ENCODE measurements at regions of chr19 and their contacts with region 1.

Region 1: DNA sequence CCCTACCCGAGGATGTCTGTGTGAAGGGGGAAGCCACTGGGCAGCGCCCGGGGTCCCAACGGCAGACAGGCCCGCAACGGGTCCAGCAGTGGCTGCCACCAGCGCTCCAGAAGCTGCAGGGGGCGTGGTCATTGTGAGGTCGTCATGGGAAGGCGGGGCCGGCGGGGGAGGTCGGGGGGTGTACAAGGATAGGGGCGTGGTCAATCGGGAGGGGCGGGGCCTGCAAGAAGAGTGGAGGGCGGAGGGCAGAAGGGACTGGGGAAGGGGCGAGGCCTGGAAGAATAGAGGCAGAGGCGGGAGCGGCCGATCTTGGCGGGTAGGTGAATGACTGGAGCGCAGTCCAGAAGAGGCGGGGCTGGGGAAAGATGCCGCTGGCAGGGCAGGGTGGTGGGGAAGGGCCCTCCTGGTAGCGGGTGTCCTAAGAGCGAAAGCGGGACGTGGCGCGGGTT is 4.4 kb downstream of the FUZ start:
- DNase-seq: peak; percentile 95
- ATAC-seq: peak; percentile 78

Region 2: DNA sequence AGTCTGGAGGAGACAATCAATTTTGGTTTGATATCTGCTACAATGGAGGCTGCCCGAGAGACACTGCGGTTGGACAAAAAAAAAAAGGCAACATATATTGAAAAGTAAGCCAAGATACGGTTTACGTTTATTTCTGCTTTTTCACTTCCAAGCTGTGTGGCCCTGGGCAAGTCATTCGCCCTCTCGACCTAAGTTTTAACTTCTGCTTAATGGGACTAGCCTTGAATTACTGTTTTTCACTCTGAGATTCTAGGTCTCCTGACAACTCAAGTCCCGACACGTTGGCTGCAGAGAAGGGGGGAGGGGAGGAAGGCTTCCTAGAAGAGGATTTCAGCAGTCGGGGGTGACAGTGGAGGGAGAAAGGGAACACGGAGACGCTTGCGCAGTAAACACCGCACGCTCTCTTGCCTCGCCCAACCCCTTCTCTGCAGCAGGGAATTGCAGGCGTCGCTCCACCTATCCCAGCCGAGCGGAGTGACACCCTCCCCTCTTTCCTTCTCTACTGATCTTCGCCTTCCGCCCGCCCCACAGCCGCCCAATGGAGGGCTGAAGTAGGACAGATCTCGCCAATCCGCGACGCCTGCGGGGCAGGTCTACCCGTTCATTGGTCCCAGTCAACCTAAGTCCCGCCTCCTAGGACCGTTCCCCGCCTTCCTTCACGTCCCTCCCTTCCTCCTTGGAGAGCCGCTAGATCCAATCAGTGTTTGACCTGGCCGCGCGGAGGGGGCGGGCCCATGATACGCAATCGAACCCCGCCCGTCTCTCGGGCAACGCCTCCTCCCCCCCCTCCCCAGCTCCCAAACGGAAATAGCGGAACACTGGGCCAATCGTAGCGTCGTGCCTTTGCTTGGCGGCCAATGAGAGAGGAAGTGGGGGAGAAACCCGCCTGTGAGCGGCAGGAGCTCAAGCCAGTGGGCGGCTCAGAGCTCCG is 42.5 kb before region 1 on chr19:
- intact Hi-C with region 1: loop called (anchors 5 kb)
- DNase-seq: peak; percentile 99
- ATAC-seq: peak; percentile 90